ENCODE measurements at regions of chr1 and their contacts with region 1.

Region 1: DNA sequence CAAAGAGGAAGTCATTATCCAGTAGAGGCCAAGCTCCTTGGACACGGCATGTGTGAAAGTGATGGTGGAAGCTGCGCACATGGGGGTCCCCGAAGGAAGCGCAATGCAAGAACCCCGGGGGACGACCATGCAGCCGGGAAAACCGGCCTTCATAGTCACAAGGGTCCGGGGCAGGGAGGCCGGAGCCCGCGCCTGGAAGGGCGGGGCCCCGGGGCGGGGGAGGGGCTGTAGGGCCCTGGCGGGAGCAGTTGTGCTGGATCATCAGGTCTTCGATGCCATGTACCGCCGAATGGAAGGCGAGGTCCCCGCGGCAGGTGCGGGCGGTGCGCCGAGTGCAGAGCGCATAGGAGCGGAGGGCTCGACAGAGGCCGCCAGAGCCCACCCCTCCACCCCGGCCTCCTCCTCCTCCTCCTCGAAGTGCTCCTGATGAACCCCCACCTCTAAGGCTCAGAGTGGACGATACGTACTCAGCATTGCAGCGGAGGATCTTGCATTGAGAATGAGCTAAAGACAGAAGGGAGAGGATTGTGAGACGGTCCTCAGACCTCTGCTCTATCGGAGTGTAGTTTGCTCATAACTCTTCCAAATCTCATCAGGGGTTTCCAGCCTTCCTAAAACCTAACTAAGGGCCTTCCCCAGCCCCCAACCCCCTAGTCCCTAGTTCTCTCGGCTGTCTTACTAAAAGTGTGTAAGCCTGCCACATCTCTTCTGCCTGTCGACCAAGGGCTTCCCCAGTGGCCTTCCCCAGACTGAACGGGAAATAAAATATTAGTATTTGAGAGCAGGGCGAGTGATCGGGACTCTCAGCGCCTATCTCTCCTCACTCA is 2.1 kb downstream of the HJV start:
- DNase-seq: no peak
- H3K4me3 ChIP-seq: no peak overlapping the region
- H3K27ac ChIP-seq: no peak overlapping the region
- H3K4me1 ChIP-seq: peaks cover 10% of the 10 kb centered on the region
- H3K27me3 ChIP-seq: no peaks in the 10 kb centered on the region
- CTCF ChIP-seq: no peak

Region 2: GRCh38 chr1:145765574-145765973 is 253.9 kb before region 1 on chr1:
- CTCF ChIA-PET with region 1: no interaction called
- POLR2A ChIA-PET with region 1: no interaction called
- intact Hi-C with region 1: no loop called
- DNase-seq: no peak
- H3K4me3 ChIP-seq: no peak overlapping the region
- H3K27ac ChIP-seq: no peak overlapping the region
- H3K4me1 ChIP-seq: no peaks in the 10 kb centered on the region
- H3K27me3 ChIP-seq: no peaks in the 10 kb centered on the region
- CTCF ChIP-seq: no peak

Region 3: GRCh38 chr1:145782166-145783099 is 237.0 kb before region 1 on chr1:
- CTCF ChIA-PET with region 1: no interaction called
- POLR2A ChIA-PET with region 1: no interaction called
- intact Hi-C with region 1: no loop called
- DNase-seq: no peak
- H3K4me3 ChIP-seq: no peak overlapping the region
- H3K27ac ChIP-seq: no peak overlapping the region
- H3K4me1 ChIP-seq: no peaks in the 10 kb centered on the region
- H3K27me3 ChIP-seq: no peaks in the 10 kb centered on the region
- CTCF ChIP-seq: no peak

Region 4: DNA sequence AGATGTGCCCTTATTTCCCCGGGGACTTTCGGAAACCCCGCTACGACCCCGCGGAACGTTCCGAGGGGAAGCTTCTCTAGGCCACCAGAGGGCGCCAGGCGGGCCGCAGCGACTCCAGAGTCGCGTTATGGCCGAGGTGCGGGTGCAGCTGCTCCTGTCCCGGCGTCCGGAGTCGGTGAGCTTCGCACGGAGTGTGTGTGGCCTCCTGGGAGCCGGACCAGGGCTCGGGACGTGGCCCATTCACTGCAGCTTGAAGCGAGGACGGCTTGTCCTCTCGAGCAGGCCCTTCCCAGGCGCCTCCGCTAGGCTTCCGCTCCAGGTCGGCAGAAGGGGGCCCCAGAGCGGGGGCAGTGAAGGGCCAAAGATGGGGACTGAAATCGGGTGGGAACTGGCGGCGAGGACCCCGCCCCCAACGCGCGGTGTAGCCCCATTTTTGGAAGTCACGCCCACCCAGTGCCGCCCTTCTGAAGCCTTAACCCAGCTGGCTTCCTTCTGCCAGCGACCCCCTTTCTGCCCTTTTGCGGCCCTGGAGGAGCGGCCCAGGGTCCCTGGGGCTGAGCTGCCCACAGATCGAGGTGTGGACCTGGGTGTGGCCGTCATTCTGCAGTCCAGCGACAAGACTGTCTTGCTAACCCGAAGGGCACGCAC is 173.8 kb before region 1 on chr1 and contains the start of gene NUDT17:
- CTCF ChIA-PET with region 1: interaction called, 3 read pairs
- POLR2A ChIA-PET with region 1: no interaction called
- intact Hi-C with region 1: loop called (anchors 2 kb)
- DNase-seq: peak; percentile 88
- H3K4me3 ChIP-seq: peak within 1 kb of the TSS; percentile 74
- H3K27ac ChIP-seq: peak within 1 kb of the TSS; percentile 85
- H3K4me1 ChIP-seq: peaks cover 12% of the 10 kb centered on the region
- H3K27me3 ChIP-seq: no peaks in the 10 kb centered on the region
- CTCF ChIP-seq: peak; percentile 98
- total RNA-seq, gene NUDT17: 3.4 and 6.6 TPM in 2 replicates

Region 5: DNA sequence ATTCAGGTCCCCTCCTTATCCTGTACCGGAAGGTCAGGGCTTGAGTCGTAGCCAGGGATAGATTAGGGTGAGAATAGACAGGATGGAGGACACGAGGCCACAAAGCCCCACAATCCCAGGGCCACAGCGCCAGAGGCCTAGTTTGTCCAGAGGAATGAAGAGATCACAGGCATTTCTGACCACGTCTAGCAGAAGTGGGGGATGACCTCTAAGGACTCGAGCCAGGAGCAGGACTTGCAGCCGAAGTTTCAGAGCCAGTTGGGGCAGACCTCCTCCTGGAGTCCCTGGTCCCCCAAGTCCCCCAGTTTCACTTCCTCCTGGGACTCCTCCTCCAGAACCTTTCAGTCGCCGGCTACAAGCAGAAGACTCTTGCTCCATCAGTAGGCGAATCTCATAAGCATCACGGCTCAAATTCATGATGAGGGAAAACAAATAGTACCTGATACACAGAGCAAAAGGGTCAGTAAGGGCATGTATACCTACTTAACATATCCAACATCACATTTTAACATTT is 107.3 kb before region 1 on chr1:
- CTCF ChIA-PET with region 1: no interaction called
- POLR2A ChIA-PET with region 1: no interaction called
- intact Hi-C with region 1: loop called (anchors 5 kb)
- DNase-seq: no peak
- H3K4me3 ChIP-seq: no peak overlapping the region
- H3K27ac ChIP-seq: no peak overlapping the region
- H3K4me1 ChIP-seq: peaks cover 3% of the 10 kb centered on the region
- H3K27me3 ChIP-seq: no peaks in the 10 kb centered on the region
- CTCF ChIP-seq: no peak

Region 6: DNA sequence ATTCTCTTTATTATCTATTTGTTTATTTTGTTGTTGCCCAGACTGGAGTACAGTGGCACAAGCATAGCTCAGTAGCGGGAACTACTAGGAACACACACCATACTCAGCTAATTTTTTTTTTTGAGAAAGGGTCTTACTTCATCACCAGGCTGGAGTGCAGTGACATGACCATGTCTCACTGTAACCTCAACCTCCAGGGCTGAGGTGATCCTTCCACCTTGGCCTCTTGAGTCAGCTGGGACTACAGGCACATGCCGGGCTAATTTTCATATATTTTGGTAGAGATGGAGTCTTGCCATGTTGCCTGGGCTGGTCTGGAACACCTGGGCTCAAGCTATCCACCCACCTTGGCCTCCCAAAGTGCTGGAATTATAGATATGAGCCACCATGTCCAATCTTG is 17.7 kb before region 1 on chr1:
- CTCF ChIA-PET with region 1: no interaction called
- POLR2A ChIA-PET with region 1: no interaction called
- intact Hi-C with region 1: loop called (anchors 2 kb)
- DNase-seq: no peak
- H3K4me3 ChIP-seq: no peak overlapping the region
- H3K27ac ChIP-seq: no peak overlapping the region
- H3K4me1 ChIP-seq: peaks cover 16% of the 10 kb centered on the region
- H3K27me3 ChIP-seq: no peaks in the 10 kb centered on the region
- CTCF ChIP-seq: no peak

Measured in A673 (cell line).